Right lobe of liver (tissue), 6 donors: ENCODE measurements at regions of chr5 and their contacts with region 1.

Region 1: GRCh38 chr5:95486191-95486590 is 68.6 kb downstream of the SKIC3 start:
- DNase-seq: no peak
- ATAC-seq: peak in 1 of 4 donors; percentile 11
- H3K4me3 ChIP-seq: no peak overlapping the region
- H3K27ac ChIP-seq: no peak overlapping the region
- H3K4me1 ChIP-seq: no peaks in the 10 kb centered on the region
- H3K27me3 ChIP-seq: no peaks in the 10 kb centered on the region
- CTCF ChIP-seq: no peak
- POLR2A ChIP-seq: no peak

Region 2: GRCh38 chr5:94524841-94525697 is 961.1 kb before region 1 on chr5:
- intact Hi-C with region 1: no loop called
- DNase-seq: no peak
- ATAC-seq: peak; percentile 87 to 93 (median 91)
- H3K4me3 ChIP-seq: no peak overlapping the region
- H3K27ac ChIP-seq: no peak overlapping the region
- H3K4me1 ChIP-seq: no peaks in the 10 kb centered on the region
- H3K27me3 ChIP-seq: no peaks in the 10 kb centered on the region
- CTCF ChIP-seq: peak; percentile 61 to 74 (median 68)
- POLR2A ChIP-seq: no peak

Region 3: GRCh38 chr5:95358848-95359247 is 127.3 kb before region 1 on chr5:
- intact Hi-C with region 1: loop called in 1 of 2 experiments (anchors 5 kb)
- DNase-seq: no peak
- ATAC-seq: no peak
- H3K4me3 ChIP-seq: no peak overlapping the region
- H3K27ac ChIP-seq: no peak overlapping the region
- H3K4me1 ChIP-seq: no peaks in the 10 kb centered on the region
- H3K27me3 ChIP-seq: no peaks in the 10 kb centered on the region
- CTCF ChIP-seq: no peak
- POLR2A ChIP-seq: no peak

Region 4: GRCh38 chr5:95533106-95533690 is 47.0 kb after region 1 on chr5:
- intact Hi-C with region 1: no loop called
- DNase-seq: no peak
- ATAC-seq: no peak
- H3K4me3 ChIP-seq: no peak overlapping the region
- H3K27ac ChIP-seq: no peak overlapping the region
- H3K4me1 ChIP-seq: no peaks in the 10 kb centered on the region
- H3K27me3 ChIP-seq: no peaks in the 10 kb centered on the region
- CTCF ChIP-seq: no peak
- POLR2A ChIP-seq: no peak